ENCODE measurements at regions of chr18 and their contacts with region 1.

Region 1: GRCh38 chr18:5600378-5601071 is 56.7 kb upstream of the EPB41L3 start:
- DNase-seq: no peak
- ATAC-seq: no peak
- H3K4me3 Mint-ChIP-seq: no peak overlapping the region
- H3K27ac Mint-ChIP-seq: no peak overlapping the region
- H3K4me1 Mint-ChIP-seq: no peaks in the 10 kb centered on the region
- H3K27me3 Mint-ChIP-seq: peaks cover 10% of the 10 kb centered on the region

Region 2: DNA sequence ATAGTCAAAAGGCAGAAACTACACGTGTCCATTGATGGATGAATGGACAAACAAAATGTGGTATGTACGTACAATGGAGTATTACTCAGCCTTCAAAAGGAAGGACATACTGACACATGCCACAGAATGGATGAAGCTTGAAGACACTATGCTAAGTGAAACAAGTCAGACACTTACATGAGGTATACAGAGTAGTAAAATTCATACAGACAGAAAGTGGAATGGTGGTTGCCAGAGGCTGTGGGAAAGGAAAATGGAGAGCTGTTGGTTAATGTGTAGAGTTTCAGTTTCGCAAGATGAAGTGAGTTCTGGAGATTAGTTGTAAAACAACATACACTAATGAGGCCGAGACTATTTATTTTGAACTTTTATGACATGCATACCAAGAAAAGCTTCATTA is 10.7 kb after region 1 on chr18:
- CTCF ChIA-PET with region 1: no interaction called
- POLR2A ChIA-PET with region 1: no interaction called
- intact Hi-C with region 1: no loop called
- DNase-seq: no peak
- ATAC-seq: no peak
- H3K4me3 Mint-ChIP-seq: no peak overlapping the region
- H3K27ac Mint-ChIP-seq: no peak overlapping the region
- H3K4me1 Mint-ChIP-seq: no peaks in the 10 kb centered on the region
- H3K27me3 Mint-ChIP-seq: peaks cover 5% of the 10 kb centered on the region

Region 3: GRCh38 chr18:5839102-5839501 is 238.6 kb after region 1 on chr18:
- CTCF ChIA-PET with region 1: no interaction called
- POLR2A ChIA-PET with region 1: no interaction called
- intact Hi-C with region 1: loop called in 1 of 2 experiments (anchors 5 kb)
- DNase-seq: no peak
- ATAC-seq: no peak
- H3K4me3 Mint-ChIP-seq: no peak overlapping the region
- H3K27ac Mint-ChIP-seq: no peak overlapping the region
- H3K4me1 Mint-ChIP-seq: no peaks in the 10 kb centered on the region
- H3K27me3 Mint-ChIP-seq: peaks cover 6% of the 10 kb centered on the region

Region 4: DNA sequence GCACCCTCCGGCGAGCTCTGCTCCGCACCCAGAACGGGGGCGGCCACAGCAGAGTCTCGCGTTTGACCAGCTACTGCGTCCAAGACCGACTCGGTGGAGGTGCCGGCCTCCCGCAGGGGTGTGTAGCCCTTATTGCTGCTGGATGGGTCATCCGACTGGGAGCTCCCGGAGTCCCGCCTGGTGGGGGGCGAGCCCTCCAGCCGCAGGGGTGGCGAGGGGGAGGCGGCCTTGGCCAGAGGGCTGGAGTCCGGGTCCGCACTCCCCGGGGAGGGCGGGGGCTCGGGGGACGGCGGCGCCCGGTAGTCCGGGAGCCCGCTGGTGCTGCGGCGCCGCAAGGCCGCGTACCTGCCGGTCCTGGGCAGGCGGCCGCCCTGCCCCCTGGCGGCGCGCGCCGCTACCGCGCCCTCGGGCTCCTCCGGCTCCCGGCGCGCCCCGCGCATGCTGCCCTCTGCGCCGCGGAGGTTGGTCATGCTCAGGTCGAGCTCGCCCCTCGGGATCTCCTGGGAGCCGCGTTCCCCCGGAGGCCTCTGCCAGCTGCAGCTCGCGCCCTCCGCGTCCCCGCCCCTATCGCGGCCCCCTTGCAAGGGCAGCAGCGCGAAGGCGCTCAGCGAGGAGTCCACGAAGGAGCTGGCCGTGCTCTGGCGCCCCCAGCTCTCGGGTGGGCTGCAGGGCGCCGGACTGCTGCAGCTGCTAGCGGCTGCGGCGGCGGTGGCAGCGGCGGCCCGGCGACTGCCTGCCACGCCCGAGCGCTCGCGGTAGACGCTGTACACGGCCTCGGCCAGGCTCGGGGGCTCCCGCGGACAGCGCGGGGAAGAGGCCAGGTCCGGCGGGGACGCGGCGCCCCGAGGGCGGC is 290.0 kb after region 1 on chr18:
- CTCF ChIA-PET with region 1: no interaction called
- POLR2A ChIA-PET with region 1: no interaction called
- intact Hi-C with region 1: loop called in 1 of 2 experiments (anchors 2 kb)
- DNase-seq: peak; percentile 66
- ATAC-seq: peak; percentile 92
- H3K4me3 Mint-ChIP-seq: no peak overlapping the region
- H3K27ac Mint-ChIP-seq: no peak overlapping the region
- H3K4me1 Mint-ChIP-seq: peaks cover 9% of the 10 kb centered on the region
- H3K27me3 Mint-ChIP-seq: peaks cover 46% of the 10 kb centered on the region

Region 5: GRCh38 chr18:6521795-6522418 is 921.4 kb after region 1 on chr18:
- CTCF ChIA-PET with region 1: no interaction called
- POLR2A ChIA-PET with region 1: no interaction called
- intact Hi-C with region 1: loop called in 1 of 2 experiments (anchors 10 kb)
- DNase-seq: peak; percentile 50
- ATAC-seq: no peak
- H3K4me3 Mint-ChIP-seq: no peak overlapping the region
- H3K27ac Mint-ChIP-seq: no peak overlapping the region
- H3K4me1 Mint-ChIP-seq: no peaks in the 10 kb centered on the region
- H3K27me3 Mint-ChIP-seq: peaks cover 3% of the 10 kb centered on the region

Region 6: GRCh38 chr18:6885992-6886796 is 1285.7 kb after region 1 on chr18:
- CTCF ChIA-PET with region 1: no interaction called
- POLR2A ChIA-PET with region 1: no interaction called
- intact Hi-C with region 1: loop called in 1 of 2 experiments (anchors 5 kb)
- DNase-seq: peak; percentile 34
- ATAC-seq: no peak
- H3K4me3 Mint-ChIP-seq: no peak overlapping the region
- H3K27ac Mint-ChIP-seq: no peak overlapping the region
- H3K4me1 Mint-ChIP-seq: no peaks in the 10 kb centered on the region
- H3K27me3 Mint-ChIP-seq: peaks cover 2% of the 10 kb centered on the region

Measured in activated CD4-positive, alpha-beta T cell treated with anti-CD3 and anti-CD28 coated beads for 36 hours (primary cell).